ENCODE measurements at regions of chr6 and their contacts with region 1.

Region 1: GRCh38 chr6:133973109-133973971 is 20.3 kb downstream of the TBPL1 start:
- DNase-seq: peak; percentile 42
- H3K4me3 ChIP-seq: no peak overlapping the region
- H3K27ac ChIP-seq: no peak overlapping the region
- H3K27me3 ChIP-seq: no peaks in the 10 kb centered on the region
- CTCF ChIP-seq: peak; percentile 73

Region 2: GRCh38 chr6:133741375-133741861 is 231.9 kb before region 1 on chr6:
- CTCF ChIA-PET with region 1: no interaction called
- POLR2A ChIA-PET with region 1: no interaction called
- DNase-seq: no peak
- H3K4me3 ChIP-seq: no peak overlapping the region
- H3K27ac ChIP-seq: no peak overlapping the region
- H3K27me3 ChIP-seq: no peaks in the 10 kb centered on the region
- CTCF ChIP-seq: no peak

Region 3: GRCh38 chr6:133952815-133953633 is 20.3 kb before region 1 on chr6 and contains the start of gene TBPL1:
- CTCF ChIA-PET with region 1: interaction called, 35 read pairs
- POLR2A ChIA-PET with region 1: no interaction called
- DNase-seq: peak; percentile 92
- H3K4me3 ChIP-seq: peak within 1 kb of the TSS; percentile 97
- H3K27ac ChIP-seq: peak within 1 kb of the TSS; percentile 92
- H3K27me3 ChIP-seq: no peaks in the 10 kb centered on the region
- CTCF ChIP-seq: no peak
- polyA plus RNA-seq, gene TBPL1: 54.1 and 71.2 TPM in 2 replicates

Region 4: GRCh38 chr6:133991096-133991593 is 17.8 kb after region 1 on chr6:
- CTCF ChIA-PET with region 1: interaction called, 19 read pairs
- POLR2A ChIA-PET with region 1: interaction called, 4 read pairs
- DNase-seq: peak; percentile 61
- H3K4me3 ChIP-seq: no peak overlapping the region
- H3K27ac ChIP-seq: peak overlapping the region; percentile 53
- H3K27me3 ChIP-seq: no peaks in the 10 kb centered on the region
- CTCF ChIP-seq: no peak

Region 5: DNA sequence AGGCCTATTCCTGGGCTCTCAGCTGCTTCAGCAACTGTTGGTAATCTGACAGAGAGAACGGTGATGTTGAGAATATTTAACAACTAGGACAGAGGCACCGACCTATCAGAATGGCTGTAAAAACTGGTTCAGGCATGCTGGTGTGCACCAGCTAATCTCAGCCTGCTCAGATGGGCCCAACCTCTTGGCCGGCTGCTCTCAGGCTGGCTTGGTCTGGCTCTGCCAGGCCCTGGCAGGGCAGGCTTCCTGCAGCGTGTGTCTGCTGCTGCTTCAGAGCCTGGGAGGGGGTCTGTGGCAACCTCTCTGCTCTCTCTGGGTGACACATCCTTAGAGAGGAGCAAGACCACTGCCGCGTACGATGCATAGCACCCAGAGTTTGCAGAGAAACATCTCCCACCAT is 74.3 kb after region 1 on chr6:
- CTCF ChIA-PET with region 1: interaction called, 16 read pairs
- POLR2A ChIA-PET with region 1: no interaction called
- DNase-seq: no peak
- H3K4me3 ChIP-seq: no peak overlapping the region
- H3K27ac ChIP-seq: no peak overlapping the region
- H3K27me3 ChIP-seq: no peaks in the 10 kb centered on the region
- CTCF ChIP-seq: no peak

Region 6: DNA sequence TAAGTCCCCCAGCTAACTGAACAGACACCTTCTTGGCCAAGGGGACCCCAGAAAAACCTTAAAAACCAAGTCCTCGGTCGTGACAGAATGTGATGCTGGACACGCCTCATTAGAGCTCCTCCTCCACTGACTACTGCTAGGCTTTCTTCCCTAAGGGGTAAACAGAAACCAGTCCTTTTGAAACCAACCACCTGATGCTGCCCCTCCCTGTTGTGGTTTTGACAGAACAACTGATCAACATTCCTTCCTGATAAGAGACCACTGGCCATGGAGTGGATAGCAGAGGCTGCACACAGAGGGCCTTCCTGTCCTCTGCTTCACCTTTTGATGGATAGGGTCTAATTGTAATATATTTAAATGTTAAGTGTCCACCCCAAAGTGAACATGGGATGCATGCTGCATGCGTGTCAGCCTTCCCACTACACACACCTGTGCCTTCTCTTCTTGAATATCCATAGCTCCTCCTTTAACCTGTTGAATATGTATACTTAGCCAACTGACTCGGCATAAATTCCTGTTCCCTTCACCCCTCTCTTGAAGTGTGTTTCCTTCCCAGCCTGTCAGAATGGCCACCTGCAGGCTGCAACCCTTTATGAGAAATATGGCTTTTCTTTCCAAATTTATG is 106.9 kb after region 1 on chr6:
- CTCF ChIA-PET with region 1: interaction called, 17 read pairs
- POLR2A ChIA-PET with region 1: no interaction called
- DNase-seq: no peak
- H3K4me3 ChIP-seq: no peak overlapping the region
- H3K27ac ChIP-seq: no peak overlapping the region
- H3K27me3 ChIP-seq: peaks cover 6% of the 10 kb centered on the region
- CTCF ChIP-seq: no peak

Region 7: DNA sequence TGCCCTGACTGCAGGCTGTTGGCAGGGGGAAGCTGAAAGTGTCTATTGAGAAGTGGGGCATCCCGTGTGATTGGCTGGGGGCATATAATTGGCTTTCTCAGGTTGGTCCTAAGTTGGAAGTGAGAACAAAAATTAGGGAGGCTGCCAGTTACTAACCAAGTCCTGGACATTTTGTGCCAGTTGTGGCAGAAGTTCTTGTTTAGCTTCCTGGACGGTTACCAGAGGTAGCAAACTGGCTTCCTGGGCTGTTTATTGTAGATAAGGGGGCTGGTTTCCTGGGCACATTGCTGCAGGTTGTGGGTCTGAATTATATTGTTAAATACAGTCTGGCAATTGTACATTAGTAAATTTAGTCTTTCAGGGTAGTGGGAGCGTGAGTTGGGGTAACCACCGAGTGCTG is 129.7 kb after region 1 on chr6:
- CTCF ChIA-PET with region 1: interaction called, 172 read pairs
- POLR2A ChIA-PET with region 1: no interaction called
- DNase-seq: no peak
- H3K4me3 ChIP-seq: no peak overlapping the region
- H3K27ac ChIP-seq: no peak overlapping the region
- H3K27me3 ChIP-seq: no peaks in the 10 kb centered on the region
- CTCF ChIP-seq: no peak

Region 8: GRCh38 chr6:134938896-134939295 is 965.6 kb after region 1 on chr6:
- CTCF ChIA-PET with region 1: interaction called, 10 read pairs
- POLR2A ChIA-PET with region 1: no interaction called
- DNase-seq: no peak
- H3K4me3 ChIP-seq: no peak overlapping the region
- H3K27ac ChIP-seq: no peak overlapping the region
- H3K27me3 ChIP-seq: no peaks in the 10 kb centered on the region
- CTCF ChIP-seq: no peak

Measured in AG04450 (cell line).